ENCODE measurements at regions of chr19 and their contacts with region 1.

Region 1: GRCh38 chr19:57632987-57633831 is at the start of gene ZNF211:
- DNase-seq: peak; percentile 94 to 97 (median 94)
- ATAC-seq: peak; percentile 100
- H3K4me3 ChIP-seq: peak within 1 kb of the TSS; percentile 68 to 93 (median 86)
- H3K27ac ChIP-seq: peak within 1 kb of the TSS in 11 of 12 donors; percentile 77 to 92 (median 85)
- H3K4me1 ChIP-seq: peaks cover 0 to 16% (median 12%) of the 10 kb centered on the region in 12 donors
- H3K27me3 ChIP-seq: no peaks in the 10 kb centered on the region
- CTCF ChIP-seq: peak in 2 of 12 donors; percentile 24 to 25
- POLR2A ChIP-seq: peak in 1 of 2 donors; percentile 59
- total RNA-seq, gene ZNF211: 6.8 to 14.4 (median 9.0) TPM

Region 2: GRCh38 chr19:57436417-57436816 is 196.8 kb before region 1 on chr19:
- intact Hi-C with region 1: no loop called
- DNase-seq: no peak
- ATAC-seq: no peak
- H3K4me3 ChIP-seq: peak overlapping the region in 6 of 12 donors; percentile 70 to 94 (median 92)
- H3K27ac ChIP-seq: no peak overlapping the region
- H3K4me1 ChIP-seq: peaks cover 0 to 24% (median 15%) of the 10 kb centered on the region in 12 donors
- H3K27me3 ChIP-seq: no peaks in the 10 kb centered on the region
- CTCF ChIP-seq: no peak
- POLR2A ChIP-seq: no peak

Region 3: DNA sequence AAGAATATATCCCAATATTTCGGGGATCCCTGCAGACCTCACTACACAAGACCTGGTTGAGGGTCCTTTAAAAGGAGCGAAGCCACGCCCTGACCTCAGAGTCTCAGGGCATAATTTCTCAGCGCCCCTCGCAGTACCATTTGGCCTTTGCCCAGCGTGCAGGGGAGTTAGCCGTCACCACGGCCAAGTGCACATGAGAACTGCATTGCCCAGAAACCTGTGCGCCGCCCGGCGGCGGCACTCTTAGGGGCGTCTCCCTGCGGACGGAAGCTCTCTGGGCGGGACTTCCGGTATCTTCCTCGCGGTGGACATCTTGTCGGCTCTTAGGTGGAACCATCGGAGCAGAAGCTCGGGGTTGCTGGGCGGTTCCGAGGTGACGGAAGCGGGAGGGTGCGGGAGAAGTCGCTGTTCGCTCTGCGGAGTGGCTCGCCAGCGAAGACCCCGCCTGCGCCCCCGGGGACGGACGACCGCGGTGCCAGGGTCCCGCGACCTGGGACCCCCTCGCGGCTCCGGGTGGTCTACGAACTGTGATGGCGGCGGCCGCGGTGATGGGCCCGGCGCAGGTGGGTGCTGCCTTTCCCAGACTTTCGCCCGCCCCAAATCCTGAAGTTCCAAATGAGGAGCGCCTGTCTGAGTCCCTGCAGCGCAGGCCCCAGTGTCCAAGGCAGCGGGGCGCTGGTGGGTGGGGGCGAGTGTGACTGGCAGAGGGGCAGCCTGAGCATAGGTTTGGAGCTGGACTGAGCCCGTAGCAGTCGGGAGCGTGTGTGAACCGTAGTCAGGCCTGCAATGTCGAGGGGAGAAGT is 19.1 kb before region 1 on chr19 and contains the start of gene ZNF134:
- intact Hi-C with region 1: loop called in 1 of 10 experiments (anchors 2 kb)
- DNase-seq: peak; percentile 93 to 97 (median 95)
- ATAC-seq: peak; percentile 95 to 99 (median 98)
- H3K4me3 ChIP-seq: peak within 1 kb of the TSS; percentile 87 to 100 (median 96)
- H3K27ac ChIP-seq: peak within 1 kb of the TSS; percentile 55 to 87 (median 80)
- H3K4me1 ChIP-seq: peaks cover 0 to 41% (median 15%) of the 10 kb centered on the region in 12 donors
- H3K27me3 ChIP-seq: no peaks in the 10 kb centered on the region
- CTCF ChIP-seq: peak in 9 of 12 donors; percentile 21 to 61 (median 46)
- POLR2A ChIP-seq: peak in 1 of 2 donors; percentile 46
- total RNA-seq, gene ZNF134: 12.6 to 15.8 (median 13.8) TPM

Region 4: DNA sequence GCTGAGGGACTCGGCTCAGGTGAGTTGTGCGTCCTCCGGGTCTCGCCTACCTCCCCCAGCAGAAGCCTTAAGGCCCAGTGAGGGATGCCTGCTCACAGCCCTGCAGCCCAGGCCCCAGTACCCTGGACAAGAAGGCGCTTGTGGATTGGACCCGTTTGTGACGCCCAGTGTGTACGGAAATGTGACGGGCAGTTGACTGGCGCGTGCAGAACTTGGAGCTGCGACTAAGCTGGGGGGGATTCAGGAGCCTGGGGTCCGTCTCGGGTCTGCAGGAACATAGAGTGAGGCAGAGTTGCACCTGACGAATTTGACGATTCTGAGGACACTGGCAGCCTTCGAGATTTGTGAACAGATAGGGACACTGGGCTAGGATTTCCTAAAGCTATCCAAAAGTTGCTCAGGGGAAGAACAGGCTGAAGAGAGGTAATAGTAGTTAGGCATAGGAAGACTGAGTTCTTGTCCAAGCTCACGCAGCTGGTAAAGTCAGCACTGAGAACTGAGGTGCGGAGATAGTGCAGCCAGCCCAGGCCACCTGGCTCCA is 49.1 kb after region 1 on chr19:
- intact Hi-C with region 1: loop called in 2 of 10 experiments (anchors 1 to 2 kb)
- DNase-seq: no peak
- ATAC-seq: no peak
- H3K4me3 ChIP-seq: peak overlapping the region; percentile 68 to 100 (median 90)
- H3K27ac ChIP-seq: peak overlapping the region in 9 of 12 donors; percentile 39 to 85 (median 79)
- H3K4me1 ChIP-seq: peaks cover 5 to 26% (median 16%) of the 10 kb centered on the region in 12 donors
- H3K27me3 ChIP-seq: peaks cover 0 to 2% (median 0%) of the 10 kb centered on the region in 9 donors
- CTCF ChIP-seq: no peak
- POLR2A ChIP-seq: no peak